ENCODE measurements at regions of chr20 and their contacts with region 1.

Region 1: DNA sequence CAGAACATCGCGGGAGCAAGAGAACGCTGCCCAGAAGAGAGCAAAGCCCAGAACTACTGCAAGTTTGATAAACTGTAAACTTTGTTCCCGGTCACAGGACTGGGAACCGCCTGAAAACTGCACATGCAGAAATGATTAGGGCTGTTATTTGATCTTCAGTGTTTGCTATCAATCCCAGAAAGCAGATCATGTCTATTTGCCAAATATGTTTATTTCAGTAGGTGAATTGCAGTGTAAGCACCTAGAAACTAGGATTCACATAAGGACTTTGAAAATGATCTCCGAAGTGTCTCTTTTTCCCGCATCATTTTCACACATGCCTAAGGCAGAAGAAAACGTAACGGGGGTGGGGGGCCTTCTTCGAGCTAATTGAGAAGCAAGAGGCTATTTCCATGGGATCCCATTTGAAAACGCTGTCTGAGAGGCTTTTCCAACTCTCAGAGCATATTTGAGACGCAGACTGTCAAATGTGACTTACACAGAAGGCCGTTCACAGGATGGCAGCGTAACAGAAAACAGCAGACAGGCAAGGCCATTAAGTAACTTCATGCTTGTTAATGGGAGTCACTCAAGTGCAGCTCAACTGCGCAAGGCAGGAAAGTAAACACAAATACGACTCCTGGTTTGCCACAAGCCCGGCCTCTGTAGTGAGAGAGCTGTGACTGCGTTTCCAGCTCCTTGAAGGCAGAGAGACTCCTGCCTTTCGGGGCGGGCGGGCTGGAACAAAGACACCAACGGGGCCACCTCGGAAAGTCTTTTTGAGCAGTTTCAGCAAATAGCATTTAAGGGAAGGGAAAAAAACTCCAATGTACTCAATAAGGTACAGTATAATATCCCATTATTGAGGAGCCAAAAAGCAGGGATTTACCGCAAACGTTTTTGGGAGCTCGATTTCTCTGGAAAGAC is 144.7 kb upstream of the ZNF217 start:
- DNase-seq: peak; percentile 88
- H3K4me3 Mint-ChIP-seq: peak overlapping the region; percentile 77
- H3K27ac Mint-ChIP-seq: peak overlapping the region; percentile 98
- H3K4me1 Mint-ChIP-seq: peaks cover 73% of the 10 kb centered on the region
- H3K27me3 Mint-ChIP-seq: no peaks in the 10 kb centered on the region
- CTCF ChIP-seq: no peak

Region 2: GRCh38 chr20:53594068-53595017 is 143.9 kb before region 1 on chr20:
- CTCF ChIA-PET with region 1: interaction called, 13 read pairs
- intact Hi-C with region 1: loop called (anchors 2 kb)
- DNase-seq: peak; percentile 100
- H3K4me3 Mint-ChIP-seq: peak overlapping the region; percentile 69
- H3K27ac Mint-ChIP-seq: peak overlapping the region; percentile 86
- H3K4me1 Mint-ChIP-seq: peaks cover 65% of the 10 kb centered on the region
- H3K27me3 Mint-ChIP-seq: no peaks in the 10 kb centered on the region
- CTCF ChIP-seq: peak; percentile 53

Region 3: GRCh38 chr20:53660078-53660909 is 78.0 kb before region 1 on chr20:
- CTCF ChIA-PET with region 1: no interaction called
- intact Hi-C with region 1: loop called (anchors 1 kb)
- DNase-seq: no peak
- H3K4me3 Mint-ChIP-seq: peak overlapping the region; percentile 64
- H3K27ac Mint-ChIP-seq: no peak overlapping the region
- H3K4me1 Mint-ChIP-seq: peaks cover 34% of the 10 kb centered on the region
- H3K27me3 Mint-ChIP-seq: no peaks in the 10 kb centered on the region
- CTCF ChIP-seq: no peak

Region 4: GRCh38 chr20:53763707-53764414 is 25.6 kb after region 1 on chr20:
- CTCF ChIA-PET with region 1: interaction called, 3 read pairs
- intact Hi-C with region 1: loop called (anchors 1 kb)
- DNase-seq: peak; percentile 54
- H3K4me3 Mint-ChIP-seq: peak overlapping the region; percentile 51
- H3K27ac Mint-ChIP-seq: peak overlapping the region; percentile 50
- H3K4me1 Mint-ChIP-seq: peaks cover 26% of the 10 kb centered on the region
- H3K27me3 Mint-ChIP-seq: no peaks in the 10 kb centered on the region
- CTCF ChIP-seq: no peak

Region 5: DNA sequence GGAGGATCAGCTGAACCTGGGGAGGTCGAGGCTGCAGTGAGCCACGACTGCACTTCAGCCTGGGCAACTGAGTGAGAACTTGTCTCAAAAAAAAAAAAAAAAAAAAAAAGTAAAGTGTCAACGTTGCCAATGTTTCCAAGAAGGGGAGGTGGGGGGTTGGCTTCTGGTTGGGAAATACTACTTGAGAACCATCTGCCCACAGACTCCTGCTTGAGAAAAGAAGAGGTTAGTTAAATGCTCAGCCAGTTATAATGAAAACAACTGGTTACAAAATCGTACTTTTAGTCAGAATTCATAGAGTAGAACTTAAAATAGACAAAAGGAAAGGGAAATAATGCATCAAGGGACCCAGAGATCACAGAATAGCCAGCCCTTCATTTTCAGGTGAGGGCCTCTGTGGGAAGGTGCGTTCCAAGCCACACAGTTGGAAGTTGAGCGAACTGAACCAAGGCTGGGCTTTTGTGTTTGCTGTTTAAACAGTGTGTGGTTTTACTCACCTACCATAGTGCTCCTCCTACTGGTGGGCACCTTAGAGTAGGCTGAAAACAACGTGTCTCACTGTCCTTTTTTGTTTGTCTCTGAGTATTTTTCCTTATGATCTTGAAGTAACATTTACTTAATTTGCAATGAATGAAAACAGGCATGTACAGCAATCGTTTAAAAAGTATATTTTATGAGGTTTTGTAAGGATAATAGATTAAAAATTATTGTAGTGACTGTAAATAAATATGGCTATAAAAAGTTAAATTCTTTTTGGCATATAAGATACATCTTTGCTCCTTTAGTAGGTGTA is 131.4 kb after region 1 on chr20:
- CTCF ChIA-PET with region 1: interaction called, 15 read pairs
- intact Hi-C with region 1: loop called (anchors 1 kb)
- DNase-seq: peak; percentile 90
- H3K4me3 Mint-ChIP-seq: no peak overlapping the region
- H3K27ac Mint-ChIP-seq: peak overlapping the region; percentile 80
- H3K4me1 Mint-ChIP-seq: peaks cover 76% of the 10 kb centered on the region
- H3K27me3 Mint-ChIP-seq: no peaks in the 10 kb centered on the region
- CTCF ChIP-seq: peak; percentile 77

Region 6: GRCh38 chr20:54062812-54063280 is 324.6 kb after region 1 on chr20:
- CTCF ChIA-PET with region 1: no interaction called
- intact Hi-C with region 1: loop called (anchors 10 kb)
- DNase-seq: peak; percentile 33
- H3K4me3 Mint-ChIP-seq: no peak overlapping the region
- H3K27ac Mint-ChIP-seq: no peak overlapping the region
- H3K4me1 Mint-ChIP-seq: peaks cover 22% of the 10 kb centered on the region
- H3K27me3 Mint-ChIP-seq: no peaks in the 10 kb centered on the region
- CTCF ChIP-seq: peak; percentile 69

Measured in Calu3 (cell line).